Sigmoid colon (tissue), 7 donors: ENCODE measurements at regions of chr3 and their contacts with region 1.

Region 1: GRCh38 chr3:9749645-9750555 is at the start of gene OGG1:
- DNase-seq: peak; percentile 99
- H3K4me3 ChIP-seq: peak within 1 kb of the TSS; percentile 57 to 71 (median 70)
- H3K27ac ChIP-seq: peak within 1 kb of the TSS; percentile 85 to 94 (median 92)
- H3K4me1 ChIP-seq: peaks cover 0 to 35% (median 28%) of the 10 kb centered on the region in 4 donors
- H3K27me3 ChIP-seq: no peaks in the 10 kb centered on the region
- CTCF ChIP-seq: peak in 1 of 4 experiments; percentile 22
- EP300 ChIP-seq: no peak
- POLR2A ChIP-seq: peak in 1 of 2 donors; percentile 49
- total RNA-seq, gene OGG1: 22.5 to 34.6 (median 31.4) TPM

Region 2: DNA sequence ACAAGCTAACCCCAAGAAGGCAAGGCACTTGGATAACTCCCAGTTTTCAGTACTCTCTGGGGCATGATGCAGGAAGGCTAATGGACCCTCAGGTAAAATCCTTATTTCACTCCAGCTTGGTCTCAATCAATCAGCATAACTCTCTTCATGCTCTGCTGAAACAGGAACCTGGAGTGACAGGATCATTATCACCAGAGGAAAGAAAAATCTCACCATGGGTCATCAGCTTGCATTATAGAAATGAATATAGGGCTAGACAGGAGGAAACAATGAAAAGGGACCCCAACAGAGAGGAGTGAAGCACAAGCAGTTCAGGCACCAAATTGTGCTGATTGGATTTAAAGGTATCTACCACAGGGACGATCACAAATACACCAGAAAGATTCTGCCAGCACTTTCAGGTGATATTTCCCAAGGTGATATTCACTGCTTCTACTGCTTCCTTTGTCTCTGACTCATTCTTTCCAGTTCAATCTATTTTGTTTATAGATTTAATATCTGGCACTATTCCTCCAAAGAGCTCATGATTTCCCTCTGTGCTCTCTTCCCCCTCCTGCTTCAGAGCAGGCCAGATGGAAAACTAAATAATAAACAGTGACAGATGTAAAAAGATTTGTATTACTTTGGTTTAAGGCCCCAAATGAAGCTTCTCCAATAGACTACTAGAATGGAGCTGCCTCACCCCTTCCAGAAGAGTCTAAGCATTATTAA is 410.0 kb before region 1 on chr3:
- intact Hi-C with region 1: no loop called
- DNase-seq: no peak
- H3K4me3 ChIP-seq: no peak overlapping the region
- H3K27ac ChIP-seq: peak overlapping the region; percentile 46 to 69 (median 55)
- H3K4me1 ChIP-seq: peaks cover 0 to 18% (median 15%) of the 10 kb centered on the region in 4 donors
- H3K27me3 ChIP-seq: no peaks in the 10 kb centered on the region
- CTCF ChIP-seq: no peak
- EP300 ChIP-seq: peak in 1 of 4 donors; percentile 16
- POLR2A ChIP-seq: no peak

Region 3: GRCh38 chr3:9669720-9670432 is 80.0 kb before region 1 on chr3:
- intact Hi-C with region 1: no loop called
- DNase-seq: no peak
- H3K4me3 ChIP-seq: no peak overlapping the region
- H3K27ac ChIP-seq: peak overlapping the region in 1 of 4 donors; percentile 3
- H3K4me1 ChIP-seq: peaks cover 0 to 14% (median 13%) of the 10 kb centered on the region in 4 donors
- H3K27me3 ChIP-seq: no peaks in the 10 kb centered on the region
- CTCF ChIP-seq: no peak
- EP300 ChIP-seq: no peak
- POLR2A ChIP-seq: no peak

Region 4: GRCh38 chr3:9769426-9770275 is 19.8 kb after region 1 on chr3 and contains the start of gene CAMK1:
- intact Hi-C with region 1: loop called (anchors 2 kb)
- DNase-seq: peak; percentile 94
- H3K4me3 ChIP-seq: peak within 1 kb of the TSS; percentile 60 to 83 (median 74)
- H3K27ac ChIP-seq: peak within 1 kb of the TSS; percentile 85 to 89 (median 87)
- H3K4me1 ChIP-seq: peaks cover 0 to 40% (median 32%) of the 10 kb centered on the region in 4 donors
- H3K27me3 ChIP-seq: no peaks in the 10 kb centered on the region
- CTCF ChIP-seq: no peak
- EP300 ChIP-seq: no peak
- POLR2A ChIP-seq: no peak
- total RNA-seq, gene CAMK1: 45.7 to 57.8 (median 56.5) TPM

Region 5: GRCh38 chr3:9792405-9793160 is 42.7 kb after region 1 on chr3 and contains the starts of genes ARPC4 and TADA3:
- intact Hi-C with region 1: loop called (anchors 2 kb)
- DNase-seq: peak; percentile 96
- H3K4me3 ChIP-seq: peak within 1 kb of the TSS; percentile 60 to 99 (median 84)
- H3K27ac ChIP-seq: peak within 1 kb of the TSS; percentile 86 to 98 (median 96)
- H3K4me1 ChIP-seq: peaks cover 0 to 40% (median 36%) of the 10 kb centered on the region in 4 donors
- H3K27me3 ChIP-seq: no peaks in the 10 kb centered on the region
- CTCF ChIP-seq: peak in 3 of 4 experiments; percentile 13 to 23 (median 15)
- EP300 ChIP-seq: peak in 1 of 4 donors; percentile 44
- POLR2A ChIP-seq: peak; percentile 55 to 57
- total RNA-seq, gene ARPC4: 75.6 to 150 (median 128) TPM
- total RNA-seq, gene TADA3: 53.2 to 72.9 (median 67.6) TPM